ENCODE measurements at regions of chr5 and their contacts with region 1.

Region 1: GRCh38 chr5:127757576-127757975 is 54.4 kb downstream of the CCDC192 start:
- DNase-seq: peak; percentile 62 to 69
- H3K4me3 ChIP-seq: no peak overlapping the region
- H3K4me3 Mint-ChIP-seq: peak overlapping the region; percentile 24
- H3K27ac Mint-ChIP-seq: peak overlapping the region; percentile 27
- H3K4me1 ChIP-seq: peaks cover 48% of the 10 kb centered on the region
- H3K4me1 Mint-ChIP-seq: peaks cover 50% of the 10 kb centered on the region
- H3K27me3 ChIP-seq: no peaks in the 10 kb centered on the region
- H3K27me3 Mint-ChIP-seq: no peaks in the 10 kb centered on the region
- CTCF ChIP-seq: peak; percentile 53

Region 2: DNA sequence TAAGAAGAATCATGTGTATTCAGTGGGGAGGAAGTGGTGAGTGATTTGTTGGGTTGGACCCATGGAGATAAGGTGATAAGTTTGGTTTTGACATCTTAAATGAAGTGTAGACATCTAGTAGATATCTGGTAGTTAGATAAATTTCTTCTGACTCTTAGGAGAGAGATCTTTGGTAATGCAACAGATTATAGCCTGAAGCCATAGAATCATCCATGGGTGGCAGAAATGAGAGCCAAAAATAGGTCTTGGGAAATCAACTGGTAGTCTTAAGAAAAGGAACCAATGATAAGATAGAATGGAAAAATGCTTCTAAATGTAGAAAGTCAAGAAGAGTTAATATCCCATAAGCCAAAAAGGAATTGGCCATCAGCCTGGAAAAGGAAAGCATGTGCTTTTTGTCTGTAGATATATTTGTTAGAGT is 1867.1 kb before region 1 on chr5:
- CTCF ChIA-PET with region 1: no interaction called
- POLR2A ChIA-PET with region 1: no interaction called
- intact Hi-C with region 1: no loop called
- DNase-seq: no peak
- H3K4me3 ChIP-seq: no peak overlapping the region
- H3K4me3 Mint-ChIP-seq: no peak overlapping the region
- H3K27ac Mint-ChIP-seq: no peak overlapping the region
- H3K4me1 ChIP-seq: no peaks in the 10 kb centered on the region
- H3K4me1 Mint-ChIP-seq: no peaks in the 10 kb centered on the region
- H3K27me3 ChIP-seq: no peaks in the 10 kb centered on the region
- H3K27me3 Mint-ChIP-seq: peaks cover 9% of the 10 kb centered on the region
- CTCF ChIP-seq: no peak

Region 3: DNA sequence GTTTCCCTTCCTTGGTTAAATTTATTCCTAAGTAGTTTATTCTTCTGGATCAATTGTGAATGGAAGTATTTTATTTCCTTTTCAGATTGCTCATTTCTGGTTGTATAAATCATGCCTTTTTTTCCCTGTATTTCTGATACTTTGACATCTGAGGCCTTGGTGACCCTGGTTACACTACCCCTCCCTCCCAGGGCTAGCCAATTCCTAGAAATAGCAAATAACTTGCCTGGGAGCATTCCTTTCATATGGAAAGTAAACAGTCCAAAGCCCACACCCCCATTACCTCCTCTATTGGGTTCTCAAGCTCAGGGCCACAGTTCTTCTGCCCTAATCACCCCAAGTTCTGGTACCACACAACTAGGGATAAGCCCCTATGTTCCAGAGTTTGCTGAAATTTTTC is 17.4 kb after region 1 on chr5:
- CTCF ChIA-PET with region 1: no interaction called
- POLR2A ChIA-PET with region 1: no interaction called
- intact Hi-C with region 1: loop called (anchors 1 kb)
- DNase-seq: peak in 1 of 2 experiments; percentile 42
- H3K4me3 ChIP-seq: no peak overlapping the region
- H3K4me3 Mint-ChIP-seq: no peak overlapping the region
- H3K27ac Mint-ChIP-seq: no peak overlapping the region
- H3K4me1 ChIP-seq: peaks cover 13% of the 10 kb centered on the region
- H3K4me1 Mint-ChIP-seq: peaks cover 18% of the 10 kb centered on the region
- H3K27me3 ChIP-seq: no peaks in the 10 kb centered on the region
- H3K27me3 Mint-ChIP-seq: no peaks in the 10 kb centered on the region
- CTCF ChIP-seq: no peak

Region 4: GRCh38 chr5:127813633-127814587 is 56.3 kb after region 1 on chr5:
- CTCF ChIA-PET with region 1: no interaction called
- POLR2A ChIA-PET with region 1: no interaction called
- intact Hi-C with region 1: loop called (anchors 2 kb)
- DNase-seq: peak; percentile 33 to 60
- H3K4me3 ChIP-seq: no peak overlapping the region
- H3K4me3 Mint-ChIP-seq: peak overlapping the region; percentile 16
- H3K27ac Mint-ChIP-seq: peak overlapping the region; percentile 66
- H3K4me1 ChIP-seq: peaks cover 39% of the 10 kb centered on the region
- H3K4me1 Mint-ChIP-seq: peaks cover 43% of the 10 kb centered on the region
- H3K27me3 ChIP-seq: no peaks in the 10 kb centered on the region
- H3K27me3 Mint-ChIP-seq: no peaks in the 10 kb centered on the region
- CTCF ChIP-seq: no peak

Region 5: GRCh38 chr5:127875235-127876021 is 117.9 kb after region 1 on chr5:
- CTCF ChIA-PET with region 1: interaction called, 9 read pairs
- POLR2A ChIA-PET with region 1: interaction called, 7 read pairs
- intact Hi-C with region 1: loop called (anchors 1 kb)
- DNase-seq: peak; percentile 87
- H3K4me3 ChIP-seq: no peak overlapping the region
- H3K4me3 Mint-ChIP-seq: no peak overlapping the region
- H3K27ac Mint-ChIP-seq: peak overlapping the region; percentile 43
- H3K4me1 ChIP-seq: peaks cover 40% of the 10 kb centered on the region
- H3K4me1 Mint-ChIP-seq: peaks cover 21% of the 10 kb centered on the region
- H3K27me3 ChIP-seq: peaks cover 1% of the 10 kb centered on the region; the same call in 1 of the 2 replicates
- H3K27me3 Mint-ChIP-seq: no peaks in the 10 kb centered on the region
- CTCF ChIP-seq: peak; percentile 48 to 50

Region 6: DNA sequence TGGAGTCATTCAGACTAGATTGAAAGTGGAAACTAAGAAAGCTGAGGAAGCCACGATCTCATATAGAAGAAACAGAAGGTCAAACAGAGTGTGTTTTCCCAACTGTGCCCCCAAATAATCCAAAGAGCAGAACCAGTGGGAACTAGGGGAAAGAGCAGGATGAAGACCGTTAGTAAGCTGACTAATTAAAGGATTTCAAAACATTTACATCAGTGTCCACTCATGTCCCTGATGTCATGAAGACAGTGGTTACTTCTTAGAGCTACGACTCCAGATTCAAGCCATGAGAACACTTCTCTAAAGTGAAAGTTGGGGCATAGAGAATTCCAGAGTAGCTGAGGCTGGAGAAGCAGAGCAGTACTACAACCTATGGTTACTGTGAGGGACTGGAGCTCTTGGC is 206.4 kb after region 1 on chr5:
- CTCF ChIA-PET with region 1: no interaction called
- POLR2A ChIA-PET with region 1: no interaction called
- intact Hi-C with region 1: no loop called
- DNase-seq: no peak
- H3K4me3 ChIP-seq: no peak overlapping the region
- H3K4me3 Mint-ChIP-seq: no peak overlapping the region
- H3K27ac Mint-ChIP-seq: no peak overlapping the region
- H3K4me1 ChIP-seq: peaks cover 7% of the 10 kb centered on the region
- H3K4me1 Mint-ChIP-seq: peaks cover 24% of the 10 kb centered on the region
- H3K27me3 ChIP-seq: no peaks in the 10 kb centered on the region
- H3K27me3 Mint-ChIP-seq: no peaks in the 10 kb centered on the region
- CTCF ChIP-seq: no peak

Region 7: GRCh38 chr5:128083033-128083810 is 325.6 kb after region 1 on chr5 and contains the start of gene SLC12A2:
- CTCF ChIA-PET with region 1: no interaction called
- POLR2A ChIA-PET with region 1: no interaction called
- intact Hi-C with region 1: loop called (anchors 1 kb)
- DNase-seq: peak; percentile 93
- H3K4me3 ChIP-seq: peak within 1 kb of the TSS; percentile 97
- H3K4me3 Mint-ChIP-seq: peak within 1 kb of the TSS; percentile 87
- H3K27ac Mint-ChIP-seq: peak within 1 kb of the TSS; percentile 81
- H3K4me1 ChIP-seq: peaks cover 15% of the 10 kb centered on the region; the same call in 1 of the 2 replicates
- H3K4me1 Mint-ChIP-seq: peaks cover 47% of the 10 kb centered on the region
- H3K27me3 ChIP-seq: no peaks in the 10 kb centered on the region
- H3K27me3 Mint-ChIP-seq: no peaks in the 10 kb centered on the region
- CTCF ChIP-seq: no peak
- total RNA-seq, gene SLC12A2: 85.2 and 87.8 TPM in 2 replicates

Region 8: DNA sequence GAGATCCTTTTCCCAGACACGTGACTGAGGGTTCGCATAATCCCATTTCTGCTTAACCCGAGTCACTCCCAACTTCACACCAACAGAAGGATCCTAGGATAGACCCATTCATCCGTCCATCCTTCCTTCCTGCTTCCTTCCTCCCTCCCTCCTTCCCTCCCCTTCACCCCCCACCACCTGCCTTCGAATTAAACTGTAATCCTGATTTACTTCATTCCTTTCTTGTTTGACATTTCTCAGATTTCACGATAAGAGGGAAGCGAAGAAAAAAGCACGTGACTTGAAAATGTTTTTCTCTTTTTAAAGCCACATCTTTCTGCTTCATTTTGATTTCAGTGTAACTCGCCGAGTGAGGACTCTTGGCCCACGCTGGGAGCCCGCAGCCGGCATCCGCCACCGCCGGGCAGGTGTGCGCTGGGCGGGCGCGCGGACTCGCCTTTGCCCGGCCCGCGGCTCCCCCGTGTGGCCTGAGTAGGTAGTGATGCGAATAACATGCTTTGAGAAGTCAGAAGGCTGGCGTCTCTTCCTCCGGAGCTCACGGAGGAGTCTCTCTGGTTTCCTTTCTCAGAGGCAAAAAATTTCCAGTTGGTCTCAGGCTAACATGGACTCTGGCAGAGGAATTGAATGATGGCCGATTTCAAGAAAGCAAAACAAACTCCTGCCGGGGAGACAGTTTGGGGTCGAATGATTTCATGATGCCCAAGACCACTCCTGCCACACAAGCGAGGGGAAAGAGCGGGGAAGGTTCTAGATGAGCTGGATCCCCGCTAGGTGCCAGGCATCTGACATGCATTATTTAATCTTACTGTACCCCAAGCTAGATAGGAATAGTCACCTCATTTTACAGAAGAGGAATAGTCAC is 443.7 kb after region 1 on chr5:
- CTCF ChIA-PET with region 1: no interaction called
- POLR2A ChIA-PET with region 1: no interaction called
- intact Hi-C with region 1: loop called (anchors 1 kb)
- DNase-seq: peak; percentile 75 to 87
- H3K4me3 ChIP-seq: no peak overlapping the region
- H3K4me3 Mint-ChIP-seq: peak overlapping the region; percentile 57
- H3K27ac Mint-ChIP-seq: no peak overlapping the region
- H3K4me1 ChIP-seq: peaks cover 21% of the 10 kb centered on the region
- H3K4me1 Mint-ChIP-seq: peaks cover 25% of the 10 kb centered on the region
- H3K27me3 ChIP-seq: no peaks in the 10 kb centered on the region
- H3K27me3 Mint-ChIP-seq: no peaks in the 10 kb centered on the region
- CTCF ChIP-seq: peak; percentile 77 to 83

Measured in Caco-2 (cell line).